Dendritic cell treated with granulocyte-macrophage colony-stimulating factor and Interleukin-4, amounts not matched to agents 40 ng/mL and 50 ng/mL, for 4 days (primary cell): ENCODE measurements at regions of chr16 and their contacts with region 1.

Region 1: GRCh38 chr16:68244903-68245853 is at the start of gene PLA2G15:
- H3K4me3 Mint-ChIP-seq: peak within 1 kb of the TSS; percentile 95
- H3K27ac Mint-ChIP-seq: peak within 1 kb of the TSS; percentile 88
- H3K4me1 Mint-ChIP-seq: peaks cover 64% of the 10 kb centered on the region
- H3K27me3 Mint-ChIP-seq: no peaks in the 10 kb centered on the region

Region 2: DNA sequence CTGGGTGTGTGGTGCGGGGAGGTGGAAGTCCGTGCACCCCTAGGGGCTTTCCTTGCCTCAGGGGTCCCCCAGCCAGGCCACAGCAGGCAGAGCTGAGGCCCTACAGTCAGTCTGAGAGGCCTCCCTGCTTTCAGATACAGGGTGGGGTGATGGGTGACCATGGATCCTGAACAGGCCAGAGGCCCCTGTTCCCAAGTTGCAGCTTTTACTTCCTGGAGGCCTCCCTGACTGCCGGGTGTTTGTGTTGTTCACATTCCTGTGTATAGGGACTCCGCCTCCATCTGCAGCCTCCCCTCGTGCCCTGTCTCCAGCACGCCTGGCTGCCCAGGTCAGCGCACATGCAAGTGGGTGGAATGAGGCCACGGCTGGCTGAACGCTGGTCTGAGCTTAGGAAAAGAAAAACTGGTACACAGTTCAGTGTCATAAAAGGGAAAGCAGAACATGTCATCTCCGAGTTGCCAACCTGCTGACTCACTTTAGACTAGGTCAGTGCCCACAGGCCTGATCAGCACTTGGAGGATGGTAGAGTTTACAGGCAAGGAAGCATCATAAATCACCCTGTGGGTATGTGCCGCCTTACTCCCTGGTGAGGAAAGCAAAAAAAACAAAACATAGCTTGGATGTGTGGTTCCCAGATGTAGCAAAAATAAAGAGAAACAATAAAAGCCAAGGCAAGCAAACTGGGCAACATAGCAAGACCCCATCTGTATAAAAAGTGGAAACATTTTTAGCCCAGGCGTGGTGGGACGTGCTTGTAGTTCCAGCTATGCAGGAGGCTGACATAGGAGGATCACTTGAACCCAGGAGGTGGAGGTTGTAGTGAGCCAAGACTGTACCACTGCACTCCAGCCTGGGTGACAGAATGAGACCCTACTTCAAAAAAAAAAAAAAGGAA is 13.0 kb after region 1 on chr16:
- intact Hi-C with region 1: loop called (anchors 1 kb)
- H3K4me3 Mint-ChIP-seq: peak overlapping the region; percentile 32
- H3K27ac Mint-ChIP-seq: peak overlapping the region; percentile 81
- H3K4me1 Mint-ChIP-seq: peaks cover 40% of the 10 kb centered on the region
- H3K27me3 Mint-ChIP-seq: no peaks in the 10 kb centered on the region